ENCODE measurements at regions of chr1 and their contacts with region 1.

Region 1: DNA sequence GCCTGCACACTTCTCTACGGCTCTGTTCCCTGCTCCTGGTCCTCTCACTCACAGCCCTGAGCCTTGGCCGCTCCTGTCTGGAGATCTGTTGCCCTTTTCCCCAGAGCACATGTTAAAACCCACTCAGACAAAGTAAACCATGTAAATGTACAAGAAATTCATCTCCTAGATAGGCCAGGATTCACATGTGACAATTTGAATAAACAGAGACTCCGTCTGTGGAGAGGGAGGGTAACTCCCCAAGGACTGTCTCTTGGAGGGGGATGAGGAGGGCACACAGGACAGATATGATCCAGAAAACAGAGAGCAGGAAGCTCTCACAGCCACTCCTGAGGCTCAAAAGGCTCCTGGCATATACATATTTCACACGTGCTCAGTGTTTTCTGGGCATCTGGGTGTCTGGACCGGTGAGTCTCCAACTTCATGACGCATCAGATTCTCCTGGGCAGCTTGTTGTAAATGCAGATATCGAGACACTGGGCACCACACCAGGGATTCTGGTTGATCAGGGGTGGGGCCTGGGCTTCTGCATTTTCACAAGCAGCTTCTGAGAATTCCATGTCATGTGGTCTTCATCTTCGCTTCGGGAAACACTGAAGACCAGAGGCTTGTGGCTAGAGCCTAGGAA is 6.4 kb upstream of the KAZN start:
- DNase-seq: no peak
- ATAC-seq: no peak
- H3K4me3 ChIP-seq: no peak overlapping the region
- H3K27ac ChIP-seq: no peak overlapping the region
- H3K4me1 ChIP-seq: no peaks in the 10 kb centered on the region
- H3K27me3 ChIP-seq: peaks cover 8% of the 10 kb centered on the region; the same call in 1 of the 2 replicates
- CTCF ChIP-seq: no peak

Region 2: GRCh38 chr1:13687151-13687715 is 904.9 kb before region 1 on chr1:
- CTCF ChIA-PET with region 1: no interaction called
- POLR2A ChIA-PET with region 1: interaction called, 12 read pairs
- in situ Hi-C with region 1: no loop called
- intact Hi-C with region 1: no loop called
- DNase-seq: no peak
- ATAC-seq: no peak
- H3K4me3 ChIP-seq: no peak overlapping the region
- H3K27ac ChIP-seq: no peak overlapping the region
- H3K4me1 ChIP-seq: no peaks in the 10 kb centered on the region
- H3K27me3 ChIP-seq: no peaks in the 10 kb centered on the region; the same call in 1 of the 2 replicates
- CTCF ChIP-seq: no peak